ENCODE measurements at regions of chr2 and their contacts with region 1.

Region 1: GRCh38 chr2:152846697-152847470 is 128.5 kb downstream of the ARL6IP6 start:
- DNase-seq: no peak
- H3K4me3 ChIP-seq: no peak overlapping the region
- H3K27ac ChIP-seq: no peak overlapping the region
- H3K4me1 ChIP-seq: no peaks in the 10 kb centered on the region
- H3K27me3 ChIP-seq: no peaks in the 10 kb centered on the region
- CTCF ChIP-seq: no peak

Region 2: DNA sequence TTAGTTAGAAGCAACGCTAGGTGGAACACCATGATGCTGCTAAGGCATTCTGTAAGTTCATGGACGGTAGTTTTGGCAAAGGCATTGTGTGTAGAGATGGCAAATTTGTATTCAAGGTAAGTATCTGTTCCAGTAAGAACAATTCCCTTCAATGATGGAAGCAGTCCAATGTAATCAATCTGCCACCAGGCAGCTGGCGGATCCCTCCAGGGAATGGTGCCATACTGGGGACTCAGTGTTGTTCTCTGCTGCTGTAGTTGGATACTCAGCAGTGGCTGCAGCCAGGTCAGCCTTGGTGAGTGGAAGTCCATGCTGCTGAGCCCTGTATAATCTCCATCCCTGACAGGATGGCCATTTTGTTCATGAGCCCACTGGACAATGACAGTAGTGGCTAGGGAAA is 65.7 kb before region 1 on chr2:
- CTCF ChIA-PET with region 1: no interaction called
- POLR2A ChIA-PET with region 1: no interaction called
- intact Hi-C with region 1: no loop called
- DNase-seq: no peak
- H3K4me3 ChIP-seq: no peak overlapping the region
- H3K27ac ChIP-seq: no peak overlapping the region
- H3K4me1 ChIP-seq: no peaks in the 10 kb centered on the region
- H3K27me3 ChIP-seq: no peaks in the 10 kb centered on the region
- CTCF ChIP-seq: no peak

Region 3: DNA sequence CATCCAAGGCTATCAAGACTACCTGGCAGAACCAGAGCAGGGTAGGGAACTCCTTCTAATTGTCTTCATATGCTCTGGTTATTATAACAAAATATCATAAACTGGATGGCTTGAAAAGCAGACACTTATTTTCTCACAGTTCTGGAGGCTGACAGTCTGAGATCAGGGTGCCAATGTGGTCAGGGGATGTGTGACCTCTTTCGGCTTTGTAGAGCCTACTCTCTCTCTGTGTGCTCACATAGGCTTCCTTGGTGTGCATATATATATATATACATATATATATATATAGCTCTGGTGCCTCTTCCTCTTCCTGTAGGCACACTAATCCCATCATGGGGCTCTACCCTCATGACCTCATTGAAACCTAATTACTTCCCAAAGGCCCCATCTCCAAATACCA is 26.8 kb before region 1 on chr2:
- CTCF ChIA-PET with region 1: no interaction called
- POLR2A ChIA-PET with region 1: no interaction called
- intact Hi-C with region 1: loop called (anchors 2 kb)
- DNase-seq: no peak
- H3K4me3 ChIP-seq: no peak overlapping the region
- H3K27ac ChIP-seq: no peak overlapping the region
- H3K4me1 ChIP-seq: no peaks in the 10 kb centered on the region
- H3K27me3 ChIP-seq: no peaks in the 10 kb centered on the region
- CTCF ChIP-seq: no peak

Region 4: DNA sequence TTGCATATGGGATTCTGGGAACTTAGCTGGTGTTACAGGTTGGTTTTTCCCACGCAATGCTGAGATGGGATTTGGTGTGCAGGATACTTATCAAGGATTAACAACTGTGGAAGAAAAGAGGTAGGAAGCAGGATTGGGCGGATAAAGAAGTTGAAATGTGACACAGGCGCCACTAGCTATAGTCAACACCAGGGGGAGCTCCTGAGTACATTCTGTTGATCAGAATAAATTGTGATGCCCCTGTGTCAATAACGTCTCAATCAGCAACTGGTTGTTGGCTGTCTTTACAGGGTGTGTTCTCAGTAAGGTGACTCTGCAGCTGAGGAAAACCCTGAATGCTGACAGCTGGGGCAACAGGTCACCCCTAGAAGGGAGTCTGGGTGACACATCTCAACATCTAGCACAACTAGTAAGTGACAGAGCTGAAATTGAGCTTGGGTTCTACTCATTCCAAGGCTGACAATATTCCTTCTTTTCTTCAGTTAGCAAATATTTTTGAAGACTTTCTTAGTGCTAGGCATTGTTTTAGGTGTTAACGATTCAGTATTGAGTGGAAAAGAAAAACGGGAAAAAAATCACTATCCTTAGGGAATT is 14.6 kb after region 1 on chr2:
- CTCF ChIA-PET with region 1: no interaction called
- POLR2A ChIA-PET with region 1: no interaction called
- intact Hi-C with region 1: no loop called
- DNase-seq: peak in 1 of 2 experiments; percentile 5
- H3K4me3 ChIP-seq: no peak overlapping the region
- H3K27ac ChIP-seq: no peak overlapping the region
- H3K4me1 ChIP-seq: no peaks in the 10 kb centered on the region
- H3K27me3 ChIP-seq: no peaks in the 10 kb centered on the region
- CTCF ChIP-seq: peak; percentile 71

Region 5: DNA sequence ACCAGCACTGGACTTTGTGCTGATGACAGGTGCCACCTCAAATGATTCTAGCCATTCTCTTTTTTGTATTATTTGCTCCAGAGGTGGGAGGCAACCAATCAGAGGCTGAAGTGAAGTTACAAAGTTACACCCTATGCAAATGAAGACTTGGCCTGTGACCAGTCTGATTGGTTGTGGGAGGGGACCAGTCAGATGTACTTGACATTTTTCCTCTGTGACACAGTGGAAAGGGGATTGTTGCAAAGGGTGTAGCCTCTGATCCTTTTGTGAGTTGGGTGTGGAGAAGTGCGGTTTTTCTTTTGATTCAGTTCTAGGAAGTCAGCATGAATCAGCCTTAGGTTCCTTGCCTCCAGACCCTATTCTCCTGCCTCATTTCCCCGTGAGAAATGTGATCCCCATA is 115.6 kb after region 1 on chr2:
- CTCF ChIA-PET with region 1: no interaction called
- POLR2A ChIA-PET with region 1: no interaction called
- intact Hi-C with region 1: no loop called
- DNase-seq: peak in 1 of 2 experiments; percentile 3
- H3K4me3 ChIP-seq: no peak overlapping the region
- H3K27ac ChIP-seq: no peak overlapping the region
- H3K4me1 ChIP-seq: no peaks in the 10 kb centered on the region
- H3K27me3 ChIP-seq: no peaks in the 10 kb centered on the region
- CTCF ChIP-seq: no peak

Region 6: DNA sequence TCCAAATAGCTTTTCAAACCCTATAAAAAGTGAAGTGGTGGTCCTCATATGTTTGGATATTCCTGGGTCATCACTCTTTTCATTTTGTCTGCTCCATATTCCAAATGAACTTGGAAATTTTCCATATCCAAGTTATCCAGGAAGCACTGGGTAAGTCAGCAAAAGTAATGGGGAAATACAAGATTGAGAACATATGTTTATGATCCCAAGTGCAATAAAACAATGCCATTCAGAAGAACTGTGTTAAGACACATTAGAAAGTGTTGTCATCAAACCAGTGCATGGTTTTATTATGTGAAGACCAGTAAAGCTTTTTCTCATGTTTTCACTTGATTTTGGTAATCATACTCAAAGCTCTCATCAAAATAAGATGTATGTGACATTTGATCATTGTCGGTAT is 268.3 kb after region 1 on chr2:
- CTCF ChIA-PET with region 1: no interaction called
- POLR2A ChIA-PET with region 1: interaction called, 12 read pairs
- intact Hi-C with region 1: no loop called
- DNase-seq: no peak
- H3K4me3 ChIP-seq: no peak overlapping the region
- H3K27ac ChIP-seq: no peak overlapping the region
- H3K4me1 ChIP-seq: no peaks in the 10 kb centered on the region
- H3K27me3 ChIP-seq: no peaks in the 10 kb centered on the region
- CTCF ChIP-seq: no peak

Region 7: DNA sequence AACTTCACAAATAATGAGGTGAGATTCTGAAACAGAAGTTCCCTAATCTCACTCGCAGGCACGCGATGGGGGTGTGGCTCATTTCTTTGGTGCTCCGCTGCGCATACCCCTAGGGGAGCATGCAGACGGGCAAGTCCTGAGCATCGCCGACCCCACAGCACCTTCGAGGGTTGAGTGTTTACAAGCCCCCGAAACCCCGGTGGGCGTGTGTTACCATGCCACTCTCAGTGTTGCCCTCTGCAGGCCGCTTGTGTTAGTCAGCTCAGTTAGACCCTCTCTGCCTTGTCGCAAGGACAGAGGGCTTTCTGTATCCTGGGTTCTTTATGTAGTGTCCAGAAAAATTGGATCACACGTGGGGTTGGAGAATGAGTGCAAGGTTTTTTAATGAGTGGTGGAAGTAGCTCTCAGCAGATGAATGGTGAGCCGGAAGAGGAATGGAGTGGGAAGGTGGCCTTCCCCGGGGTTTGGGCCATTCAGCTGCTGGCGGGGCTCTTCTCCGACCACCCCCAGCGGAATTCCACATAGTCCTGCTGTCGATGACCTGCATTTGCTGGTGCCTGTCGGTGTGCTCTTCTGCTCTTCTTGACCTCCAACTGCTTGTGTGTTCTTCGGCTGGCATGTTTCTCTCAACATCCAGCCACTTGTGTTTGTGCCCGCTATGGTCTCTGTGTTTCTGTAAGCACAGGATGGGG is 440.4 kb after region 1 on chr2:
- CTCF ChIA-PET with region 1: no interaction called
- POLR2A ChIA-PET with region 1: no interaction called
- intact Hi-C with region 1: loop called (anchors 5 kb)
- DNase-seq: no peak
- H3K4me3 ChIP-seq: no peak overlapping the region
- H3K27ac ChIP-seq: no peak overlapping the region
- H3K4me1 ChIP-seq: no peaks in the 10 kb centered on the region
- H3K27me3 ChIP-seq: no peaks in the 10 kb centered on the region
- CTCF ChIP-seq: no peak

Measured in PC-9 (cell line).